Endothelial cell of umbilical vein (primary cell): ENCODE measurements at regions of chr16 and their contacts with region 1.

Region 1: DNA sequence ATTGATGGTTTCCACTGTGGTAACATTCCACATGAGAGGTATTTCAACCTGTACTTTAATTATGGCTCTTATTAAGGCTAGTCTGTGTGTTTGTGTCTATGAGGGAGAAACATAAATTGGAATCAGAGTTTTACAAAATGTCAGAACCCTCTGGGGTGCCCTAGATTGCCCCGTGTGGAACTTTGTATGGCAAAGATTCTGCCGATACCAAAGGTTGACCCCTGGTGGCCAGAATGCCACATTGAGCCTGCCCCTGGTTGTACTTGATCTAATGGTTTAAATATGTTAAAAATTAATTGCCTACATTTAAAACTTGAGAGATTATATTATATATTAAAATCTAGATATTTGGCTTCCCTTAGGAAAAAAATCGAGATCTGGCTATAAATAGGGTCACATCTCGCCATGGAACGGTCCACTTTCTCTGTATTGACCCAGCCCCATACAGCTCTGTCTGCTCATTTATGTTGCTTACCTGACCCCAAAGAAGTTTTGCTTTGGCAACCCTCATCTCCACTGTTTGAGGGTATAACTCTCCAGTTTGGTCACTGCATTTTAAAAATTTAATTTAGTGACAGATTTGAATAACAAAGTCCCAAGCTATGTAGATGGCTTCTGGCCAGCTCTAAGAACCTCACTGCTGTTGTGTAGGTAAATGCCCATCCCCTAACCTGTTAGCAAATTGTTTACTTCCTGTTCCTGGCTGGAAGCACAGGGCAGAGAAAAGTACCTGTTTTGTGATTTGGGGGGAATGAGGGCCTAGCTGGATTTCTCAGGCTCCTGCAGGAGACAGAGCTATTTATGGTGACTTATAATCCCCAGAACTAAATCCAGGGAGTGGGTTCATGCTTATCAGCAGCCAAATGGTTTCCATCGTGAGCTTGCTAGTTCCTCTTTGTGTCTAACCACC is 95.0 kb downstream of the PLCG2 start:
- DNase-seq: peak; percentile 63
- H3K4me3 ChIP-seq: no peak overlapping the region
- H3K27ac ChIP-seq: no peak overlapping the region
- H3K4me1 ChIP-seq: peaks cover 11% of the 10 kb centered on the region
- H3K27me3 ChIP-seq: no peaks in the 10 kb centered on the region
- CTCF ChIP-seq: peak; percentile 76 to 81
- POLR2A ChIP-seq: no peak

Region 2: GRCh38 chr16:81623363-81624102 is 250.6 kb before region 1 on chr16:
- CTCF ChIA-PET with region 1: no interaction called
- POLR2A ChIA-PET with region 1: no interaction called
- dilution Hi-C with region 1: no loop called
- intact Hi-C with region 1: loop called (anchors 10 kb)
- DNase-seq: peak; percentile 80
- H3K4me3 ChIP-seq: no peak overlapping the region
- H3K27ac ChIP-seq: no peak overlapping the region
- H3K4me1 ChIP-seq: peaks cover 31% of the 10 kb centered on the region
- H3K27me3 ChIP-seq: no peaks in the 10 kb centered on the region
- CTCF ChIP-seq: peak; percentile 57 to 59
- POLR2A ChIP-seq: no peak

Region 3: DNA sequence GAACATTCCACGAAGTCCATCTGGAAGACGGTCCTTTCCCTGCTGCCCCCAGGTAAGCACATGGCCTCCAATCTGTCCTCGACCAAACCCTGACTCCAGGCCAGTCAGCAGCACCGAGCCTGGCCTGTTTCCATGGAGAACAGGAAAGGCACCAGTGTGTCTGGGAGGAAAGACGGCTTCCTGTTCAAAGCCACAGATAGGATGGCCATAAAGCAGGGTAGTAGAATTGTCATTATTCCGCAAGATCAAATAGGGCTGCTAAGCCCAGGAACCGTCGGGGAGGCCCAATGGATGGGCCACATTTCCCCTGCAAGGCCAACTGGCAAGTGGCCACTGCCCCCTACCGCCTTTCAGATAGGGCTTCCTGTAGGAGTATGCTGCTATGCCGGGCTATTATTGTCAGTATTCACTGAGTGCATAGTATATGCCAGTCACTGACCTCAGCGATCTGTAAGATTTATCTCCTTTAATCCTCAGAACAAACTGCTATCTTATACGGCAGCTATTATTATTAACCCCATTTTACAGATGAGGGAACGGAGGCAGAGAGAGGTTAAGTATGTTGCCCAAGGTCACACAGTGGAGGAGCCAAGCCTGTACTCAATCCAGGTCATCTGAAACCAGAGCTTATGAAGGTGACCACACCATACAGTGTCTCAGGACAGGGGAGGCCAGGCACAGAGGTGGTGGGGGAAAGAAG is 118.0 kb before region 1 on chr16:
- CTCF ChIA-PET with region 1: interaction called, 34 read pairs
- POLR2A ChIA-PET with region 1: no interaction called
- dilution Hi-C with region 1: no loop called
- intact Hi-C with region 1: loop called (anchors 1 kb)
- DNase-seq: peak; percentile 78
- H3K4me3 ChIP-seq: no peak overlapping the region
- H3K27ac ChIP-seq: peak overlapping the region; percentile 47
- H3K4me1 ChIP-seq: peaks cover 18% of the 10 kb centered on the region
- H3K27me3 ChIP-seq: no peaks in the 10 kb centered on the region
- CTCF ChIP-seq: peak in 1 of 2 donors; percentile 24
- POLR2A ChIP-seq: no peak

Region 4: GRCh38 chr16:81817789-81818567 is 56.1 kb before region 1 on chr16:
- CTCF ChIA-PET with region 1: interaction called, 7 read pairs
- POLR2A ChIA-PET with region 1: no interaction called
- dilution Hi-C with region 1: no loop called
- intact Hi-C with region 1: loop called (anchors 5 kb)
- DNase-seq: no peak
- H3K4me3 ChIP-seq: no peak overlapping the region
- H3K27ac ChIP-seq: no peak overlapping the region
- H3K4me1 ChIP-seq: no peaks in the 10 kb centered on the region
- H3K27me3 ChIP-seq: no peaks in the 10 kb centered on the region
- CTCF ChIP-seq: no peak
- POLR2A ChIP-seq: no peak

Region 5: GRCh38 chr16:81885976-81886586 is 12.0 kb after region 1 on chr16:
- CTCF ChIA-PET with region 1: interaction called, 12 read pairs
- POLR2A ChIA-PET with region 1: no interaction called
- dilution Hi-C with region 1: no loop called
- intact Hi-C with region 1: no loop called
- DNase-seq: peak; percentile 40
- H3K4me3 ChIP-seq: no peak overlapping the region
- H3K27ac ChIP-seq: no peak overlapping the region
- H3K4me1 ChIP-seq: no peaks in the 10 kb centered on the region
- H3K27me3 ChIP-seq: no peaks in the 10 kb centered on the region
- CTCF ChIP-seq: peak; percentile 73 to 78
- POLR2A ChIP-seq: no peak